ENCODE measurements at regions of chr7 and their contacts with region 1.

Region 1: DNA sequence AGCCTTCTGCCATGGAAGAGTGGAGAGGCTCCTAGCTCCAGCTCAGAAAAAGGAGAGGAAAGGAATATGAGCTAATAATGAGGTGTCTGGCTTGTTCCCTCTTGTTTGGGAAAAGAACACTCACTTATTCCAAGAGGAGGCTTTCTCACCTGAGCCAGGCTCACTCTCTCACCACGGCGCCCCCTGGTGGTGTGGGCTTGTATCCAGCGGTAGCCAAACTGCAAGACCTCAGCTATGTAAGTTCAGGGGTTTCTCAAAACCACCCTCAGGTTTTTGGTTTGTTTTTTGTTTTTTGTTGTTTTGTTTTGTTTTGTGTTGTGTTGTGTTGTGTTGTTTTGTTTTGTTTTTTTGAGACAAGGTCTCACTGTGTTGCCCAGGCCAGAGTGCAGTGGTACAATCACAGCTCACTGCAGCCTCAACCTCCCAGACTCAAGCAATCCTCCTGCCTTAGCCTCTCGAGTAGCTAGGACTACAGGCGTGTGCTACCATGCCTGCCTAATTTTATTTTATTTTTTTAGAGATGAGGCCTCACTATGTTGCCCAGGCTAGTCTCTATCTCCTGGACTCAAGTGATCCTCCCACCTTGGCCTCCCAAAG is 124.0 kb downstream of the TMEM130 start:
- DNase-seq: peak in 9 of 10 donors; percentile 23 to 70 (median 58)
- H3K4me3 ChIP-seq: no peak overlapping the region
- H3K27ac ChIP-seq: no peak overlapping the region
- H3K27me3 ChIP-seq: peaks cover 0 to 24% (median 0%) of the 10 kb centered on the region in 45 donors
- CTCF ChIP-seq: peak; percentile 45 to 79 (median 68)

Region 2: GRCh38 chr7:98251231-98251840 is 494.5 kb before region 1 on chr7:
- intact Hi-C with region 1: no loop called
- DNase-seq: peak in 3 of 10 donors; percentile 31 to 73 (median 51)
- H3K4me3 ChIP-seq: peak overlapping the region; percentile 67 to 100 (median 96)
- H3K27ac ChIP-seq: peak overlapping the region in 42 of 59 donors; percentile 20 to 92 (median 72)
- H3K27me3 ChIP-seq: no peaks in the 10 kb centered on the region
- CTCF ChIP-seq: no peak

Region 3: DNA sequence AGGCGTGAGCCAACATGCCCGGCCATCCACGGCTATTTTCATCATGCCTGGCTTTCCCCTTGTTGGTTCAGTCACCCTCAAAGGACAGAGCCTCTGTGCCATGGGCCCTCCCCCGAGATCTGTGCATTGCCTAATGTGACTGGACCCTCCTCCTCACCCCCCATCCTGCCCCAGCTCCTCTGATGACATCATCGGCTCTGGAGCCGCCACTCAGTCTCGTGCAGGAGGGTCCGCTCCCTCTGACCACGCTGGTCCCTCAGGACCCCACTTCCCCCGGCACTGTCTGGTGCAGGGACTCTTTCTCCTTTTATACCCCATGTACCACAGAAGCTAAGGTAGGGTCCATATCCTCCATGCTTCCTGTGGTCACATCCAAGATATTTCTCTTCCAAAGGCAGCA is 311.7 kb before region 1 on chr7:
- intact Hi-C with region 1: loop called (anchors 1 to 10 kb)
- DNase-seq: no peak
- H3K4me3 ChIP-seq: no peak overlapping the region
- H3K27ac ChIP-seq: no peak overlapping the region
- H3K27me3 ChIP-seq: peaks cover 0 to 3% (median 0%) of the 10 kb centered on the region in 45 donors
- CTCF ChIP-seq: no peak

Region 4: GRCh38 chr7:98724591-98724990 is 21.2 kb before region 1 on chr7:
- intact Hi-C with region 1: no loop called
- DNase-seq: no peak
- H3K4me3 ChIP-seq: no peak overlapping the region
- H3K27ac ChIP-seq: no peak overlapping the region
- H3K27me3 ChIP-seq: peaks cover 0 to 20% (median 5%) of the 10 kb centered on the region in 45 donors
- CTCF ChIP-seq: no peak